Panc1 (cell line): ENCODE measurements at regions of chr12 and their contacts with region 1.

Region 1: GRCh38 chr12:55073043-55074022 is 52.9 kb upstream of the OR9K2 start:
- DNase-seq: peak; percentile 39
- ATAC-seq: peak; percentile 79; the same call in 1 of the 2 replicates
- H3K4me3 ChIP-seq: no peak overlapping the region
- H3K27ac ChIP-seq: no peak overlapping the region
- H3K4me1 ChIP-seq: no peaks in the 10 kb centered on the region
- H3K27me3 ChIP-seq: peaks cover 3% of the 10 kb centered on the region; the same call in 1 of the 2 replicates
- CTCF ChIP-seq: peak; percentile 79

Region 2: GRCh38 chr12:54749191-54749818 is 324.0 kb before region 1 on chr12:
- CTCF ChIA-PET with region 1: no interaction called
- POLR2A ChIA-PET with region 1: no interaction called
- in situ Hi-C with region 1: no loop called
- intact Hi-C with region 1: loop called (anchors 2 kb)
- DNase-seq: peak; percentile 36
- ATAC-seq: 0 out of 2 replicates have a peak, but pooled peaks have one; percentile 78
- H3K4me3 ChIP-seq: no peak overlapping the region
- H3K27ac ChIP-seq: no peak overlapping the region
- H3K4me1 ChIP-seq: no peaks in the 10 kb centered on the region
- H3K27me3 ChIP-seq: no peaks in the 10 kb centered on the region
- CTCF ChIP-seq: peak; percentile 72

Region 3: DNA sequence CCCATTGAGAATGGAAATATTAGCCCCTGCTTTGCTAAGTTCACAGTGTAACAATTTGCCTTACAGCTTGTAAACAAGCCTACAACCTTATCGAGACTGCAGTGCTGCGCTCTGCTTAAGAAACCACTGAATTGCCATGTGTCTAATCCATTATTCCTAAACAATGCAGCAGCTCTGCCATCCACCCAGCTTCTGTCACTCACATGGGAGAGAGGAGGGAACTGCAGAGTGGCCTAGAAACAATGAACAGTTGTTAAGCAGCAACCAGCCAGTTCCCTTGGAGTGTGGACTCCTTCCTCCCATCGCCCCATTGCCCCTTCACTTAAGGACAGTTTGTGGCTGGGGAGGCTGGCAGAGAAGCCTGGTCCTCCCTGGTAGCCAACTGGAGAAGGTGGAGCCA is 131.7 kb before region 1 on chr12:
- CTCF ChIA-PET with region 1: no interaction called
- POLR2A ChIA-PET with region 1: no interaction called
- in situ Hi-C with region 1: no loop called
- intact Hi-C with region 1: no loop called
- DNase-seq: no peak
- ATAC-seq: no peak
- H3K4me3 ChIP-seq: no peak overlapping the region
- H3K27ac ChIP-seq: no peak overlapping the region
- H3K4me1 ChIP-seq: no peaks in the 10 kb centered on the region
- H3K27me3 ChIP-seq: no peaks in the 10 kb centered on the region
- CTCF ChIP-seq: no peak

Region 4: DNA sequence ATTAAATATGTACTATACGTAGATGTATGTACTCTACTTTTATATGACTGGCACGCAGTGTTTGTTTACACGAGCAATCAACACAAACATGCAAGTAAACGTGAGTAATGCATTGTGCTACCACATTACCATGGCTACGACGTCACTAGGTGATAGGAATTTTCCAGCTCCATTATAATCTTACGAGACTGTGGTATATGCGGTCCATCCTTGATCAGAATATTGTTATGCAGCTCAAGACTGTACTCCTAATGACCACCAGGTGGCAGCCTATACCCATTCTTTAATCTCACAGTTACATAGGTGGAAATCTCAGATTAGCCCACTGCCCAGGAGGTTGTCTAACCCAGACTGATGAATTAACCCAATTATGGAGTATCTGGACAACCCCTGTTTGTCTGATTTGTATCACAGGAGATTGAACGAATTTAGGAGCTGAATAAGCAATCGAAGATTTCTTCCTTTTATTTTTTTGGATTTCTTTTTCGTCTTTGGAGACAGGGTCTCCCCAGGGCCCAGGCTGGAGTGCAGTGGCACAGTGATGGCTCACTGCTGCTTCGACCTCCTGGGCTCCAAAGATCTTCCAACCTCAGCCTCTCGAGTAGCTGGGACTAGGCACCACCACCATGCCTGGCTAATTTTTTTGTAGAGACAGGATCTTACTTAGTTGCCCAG is 80.0 kb before region 1 on chr12:
- CTCF ChIA-PET with region 1: interaction called, 26 read pairs
- POLR2A ChIA-PET with region 1: no interaction called
- in situ Hi-C with region 1: no loop called
- intact Hi-C with region 1: loop called (anchors 1 kb)
- DNase-seq: peak; percentile 58
- ATAC-seq: peak; percentile 94
- H3K4me3 ChIP-seq: no peak overlapping the region
- H3K27ac ChIP-seq: no peak overlapping the region
- H3K4me1 ChIP-seq: no peaks in the 10 kb centered on the region
- H3K27me3 ChIP-seq: peaks cover 22% of the 10 kb centered on the region
- CTCF ChIP-seq: peak; percentile 84

Region 5: DNA sequence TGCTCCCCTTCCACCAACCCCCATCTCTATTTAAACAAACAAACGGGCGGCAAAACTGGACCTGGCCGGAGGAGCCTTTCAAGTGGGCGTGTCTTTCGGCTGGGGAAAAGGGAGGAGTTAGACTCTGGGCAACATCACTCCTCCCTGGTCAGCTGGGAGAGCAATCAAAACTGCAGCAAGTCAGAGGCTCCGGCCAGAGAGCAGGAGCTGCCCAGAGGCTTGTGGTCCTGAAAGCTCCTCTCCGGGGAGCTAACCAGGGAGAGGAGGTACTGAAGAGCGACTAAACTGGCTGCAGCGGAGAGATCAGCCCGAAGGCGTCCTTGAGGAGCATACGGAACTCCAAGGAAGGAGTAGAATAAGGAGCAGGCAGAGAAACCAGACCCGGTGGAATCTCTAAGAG is 53.6 kb before region 1 on chr12 and contains the start of gene NEUROD4:
- CTCF ChIA-PET with region 1: no interaction called
- POLR2A ChIA-PET with region 1: no interaction called
- in situ Hi-C with region 1: no loop called
- intact Hi-C with region 1: no loop called
- DNase-seq: no peak
- ATAC-seq: peak; percentile 45; the same call in 1 of the 2 replicates
- H3K4me3 ChIP-seq: no peak within 1 kb of the TSS
- H3K27ac ChIP-seq: no peak within 1 kb of the TSS
- H3K4me1 ChIP-seq: peaks cover 6% of the 10 kb centered on the region; the same call in 1 of the 2 replicates
- H3K27me3 ChIP-seq: peaks cover 28% of the 10 kb centered on the region
- CTCF ChIP-seq: no peak
- total RNA-seq, gene NEUROD4: not detected

Region 6: DNA sequence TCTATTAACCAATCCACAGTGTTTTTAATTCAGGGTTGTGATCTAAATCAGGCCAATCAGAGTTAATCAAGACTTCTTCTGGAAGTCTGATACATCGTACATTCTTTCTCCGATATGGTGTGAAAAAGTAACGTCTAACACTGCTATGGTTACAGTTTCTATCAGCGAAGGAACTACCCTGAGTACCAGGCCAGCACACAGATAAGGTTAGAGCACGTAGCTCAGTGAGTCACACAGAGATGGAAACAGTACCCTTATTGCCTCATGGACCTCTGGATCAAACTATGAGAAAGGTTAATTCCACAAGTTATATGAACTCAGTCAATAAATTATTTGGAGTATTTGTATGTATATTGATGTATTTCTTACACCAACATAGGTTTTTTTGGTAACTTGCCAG is 422.2 kb after region 1 on chr12:
- CTCF ChIA-PET with region 1: no interaction called
- POLR2A ChIA-PET with region 1: no interaction called
- in situ Hi-C with region 1: no loop called
- intact Hi-C with region 1: no loop called
- DNase-seq: no peak
- ATAC-seq: no peak
- H3K4me3 ChIP-seq: no peak overlapping the region
- H3K27ac ChIP-seq: no peak overlapping the region
- H3K4me1 ChIP-seq: no peaks in the 10 kb centered on the region
- H3K27me3 ChIP-seq: peaks cover 2% of the 10 kb centered on the region; the same call in 1 of the 2 replicates
- CTCF ChIP-seq: no peak